ENCODE measurements at regions of chr15 and their contacts with region 1.

Region 1: GRCh38 chr15:81265944-81266775 is 57.8 kb downstream of the STARD5 start:
- DNase-seq: peak; percentile 84
- ATAC-seq: peak; percentile 93 to 95
- H3K4me3 ChIP-seq: no peak overlapping the region
- H3K27ac ChIP-seq: no peak overlapping the region
- H3K4me1 ChIP-seq: peaks cover 22% of the 10 kb centered on the region
- H3K27me3 ChIP-seq: no peaks in the 10 kb centered on the region
- CTCF ChIP-seq: peak; percentile 86

Region 2: DNA sequence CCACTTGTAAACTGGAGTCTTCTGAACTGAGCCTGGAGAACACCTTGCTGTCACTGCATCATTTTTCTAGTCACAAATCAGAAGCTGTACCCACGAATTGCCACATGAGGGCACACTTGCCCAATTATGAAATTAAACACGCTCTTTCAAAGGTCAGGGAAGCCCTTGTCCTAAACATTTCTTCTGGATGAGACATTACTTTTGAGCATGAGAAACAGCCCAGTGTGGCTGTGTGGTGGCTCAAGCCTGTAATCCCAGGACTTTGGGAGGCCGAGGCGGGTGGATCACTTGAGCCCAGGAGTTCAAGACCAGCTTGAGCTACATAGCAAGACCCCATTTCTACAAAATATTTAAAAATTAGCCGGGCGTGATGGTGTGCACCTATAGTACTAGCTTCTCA is 159.6 kb before region 1 on chr15:
- intact Hi-C with region 1: loop called (anchors 5 kb)
- DNase-seq: no peak
- ATAC-seq: peak; percentile 78 to 80
- H3K4me3 ChIP-seq: no peak overlapping the region
- H3K27ac ChIP-seq: no peak overlapping the region
- H3K4me1 ChIP-seq: peaks cover 23% of the 10 kb centered on the region
- H3K27me3 ChIP-seq: no peaks in the 10 kb centered on the region
- CTCF ChIP-seq: peak; percentile 78

Region 3: GRCh38 chr15:81155375-81156218 is 110.6 kb before region 1 on chr15:
- intact Hi-C with region 1: loop called (anchors 10 kb)
- DNase-seq: no peak
- ATAC-seq: peak; percentile 42 to 68
- H3K4me3 ChIP-seq: no peak overlapping the region
- H3K27ac ChIP-seq: no peak overlapping the region
- H3K4me1 ChIP-seq: peaks cover 23% of the 10 kb centered on the region
- H3K27me3 ChIP-seq: no peaks in the 10 kb centered on the region
- CTCF ChIP-seq: peak; percentile 69

Measured in lower lobe of right lung (tissue), 2 donors.